ENCODE measurements at regions of chr9 and their contacts with region 1.

Region 1: GRCh38 chr9:71911253-71912074 is at the start of gene C9orf85:
- DNase-seq: peak; percentile 99
- ATAC-seq: peak; percentile 95
- H3K4me3 Mint-ChIP-seq: peak within 1 kb of the TSS; percentile 100
- H3K27ac Mint-ChIP-seq: peak within 1 kb of the TSS; percentile 97
- H3K4me1 Mint-ChIP-seq: peaks cover 61% of the 10 kb centered on the region
- H3K27me3 Mint-ChIP-seq: no peaks in the 10 kb centered on the region
- CTCF ChIP-seq: no peak
- total RNA-seq, gene C9orf85: 7.6 to 8.9 TPM

Region 2: GRCh38 chr9:71725590-71726338 is 185.7 kb before region 1 on chr9:
- CTCF ChIA-PET with region 1: no interaction called
- POLR2A ChIA-PET with region 1: no interaction called
- intact Hi-C with region 1: no loop called
- DNase-seq: no peak
- ATAC-seq: no peak
- H3K4me3 Mint-ChIP-seq: no peak overlapping the region
- H3K27ac Mint-ChIP-seq: no peak overlapping the region
- H3K4me1 Mint-ChIP-seq: peaks cover 5% of the 10 kb centered on the region
- H3K27me3 Mint-ChIP-seq: no peaks in the 10 kb centered on the region
- CTCF ChIP-seq: no peak

Region 3: DNA sequence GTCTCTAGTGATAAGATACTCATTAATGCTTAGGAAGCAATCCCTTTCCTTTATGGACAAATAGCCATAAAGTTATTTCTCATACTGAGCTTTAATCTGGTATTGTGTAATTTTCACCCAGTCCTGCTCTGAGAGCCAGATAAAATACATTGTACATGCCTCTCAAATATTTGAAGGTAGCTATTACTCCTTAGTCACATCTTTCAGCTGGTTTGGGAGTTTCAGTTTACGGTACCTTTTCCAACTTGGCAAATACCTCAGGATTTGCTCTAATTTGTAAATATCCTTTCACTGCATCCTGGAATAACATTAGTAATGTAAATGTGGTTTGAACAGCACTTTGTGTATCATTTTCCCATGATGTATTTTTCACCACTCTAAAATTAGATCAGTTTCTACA is 47.8 kb before region 1 on chr9:
- CTCF ChIA-PET with region 1: no interaction called
- POLR2A ChIA-PET with region 1: interaction called, 4 read pairs
- intact Hi-C with region 1: loop called (anchors 5 kb)
- DNase-seq: no peak
- ATAC-seq: no peak
- H3K4me3 Mint-ChIP-seq: no peak overlapping the region
- H3K27ac Mint-ChIP-seq: no peak overlapping the region
- H3K4me1 Mint-ChIP-seq: peaks cover 10% of the 10 kb centered on the region
- H3K27me3 Mint-ChIP-seq: no peaks in the 10 kb centered on the region
- CTCF ChIP-seq: no peak